ENCODE measurements at regions of chr3 and their contacts with region 1.

Region 1: GRCh38 chr3:125651244-125651643 is 55.9 kb upstream of the OSBPL11 start:
- DNase-seq: no peak
- ATAC-seq: no peak
- H3K4me3 ChIP-seq: no peak overlapping the region
- H3K27ac ChIP-seq: no peak overlapping the region
- H3K4me1 ChIP-seq: no peaks in the 10 kb centered on the region
- H3K27me3 ChIP-seq: no peaks in the 10 kb centered on the region
- CTCF ChIP-seq: no peak
- EP300 ChIP-seq: no peak
- POLR2A ChIP-seq: no peak
- RAD21 ChIP-seq: no peak

Region 2: GRCh38 chr3:125634336-125634950 is 16.8 kb before region 1 on chr3:
- CTCF ChIA-PET with region 1: no interaction called
- POLR2A ChIA-PET with region 1: no interaction called
- RAD21 ChIA-PET with region 1: no interaction called
- SMC1A ChIA-PET with region 1: no interaction called
- in situ Hi-C with region 1: no loop called
- intact Hi-C with region 1: no loop called
- DNase-seq: no peak
- ATAC-seq: no peak
- H3K4me3 ChIP-seq: no peak overlapping the region
- H3K27ac ChIP-seq: no peak overlapping the region
- H3K4me1 ChIP-seq: no peaks in the 10 kb centered on the region
- H3K27me3 ChIP-seq: no peaks in the 10 kb centered on the region
- CTCF ChIP-seq: no peak
- EP300 ChIP-seq: no peak
- POLR2A ChIP-seq: no peak
- RAD21 ChIP-seq: no peak

Region 3: GRCh38 chr3:125662675-125663074 is 11.4 kb after region 1 on chr3:
- CTCF ChIA-PET with region 1: interaction called, 4 read pairs
- POLR2A ChIA-PET with region 1: no interaction called
- RAD21 ChIA-PET with region 1: no interaction called
- SMC1A ChIA-PET with region 1: interaction called, 27 read pairs
- in situ Hi-C with region 1: no loop called
- intact Hi-C with region 1: no loop called
- DNase-seq: no peak
- ATAC-seq: no peak
- H3K4me3 ChIP-seq: no peak overlapping the region
- H3K27ac ChIP-seq: no peak overlapping the region
- H3K4me1 ChIP-seq: no peaks in the 10 kb centered on the region
- H3K27me3 ChIP-seq: no peaks in the 10 kb centered on the region
- CTCF ChIP-seq: no peak
- EP300 ChIP-seq: no peak
- POLR2A ChIP-seq: no peak
- RAD21 ChIP-seq: no peak

Region 4: GRCh38 chr3:127089486-127090145 is 1438.4 kb after region 1 on chr3:
- CTCF ChIA-PET with region 1: no interaction called
- POLR2A ChIA-PET with region 1: no interaction called
- RAD21 ChIA-PET with region 1: no interaction called
- SMC1A ChIA-PET with region 1: no interaction called
- in situ Hi-C with region 1: no loop called
- intact Hi-C with region 1: no loop called
- DNase-seq: no peak
- ATAC-seq: no peak
- H3K4me3 ChIP-seq: no peak overlapping the region
- H3K27ac ChIP-seq: no peak overlapping the region
- H3K4me1 ChIP-seq: no peaks in the 10 kb centered on the region
- H3K27me3 ChIP-seq: peaks cover 0 to 2% of the 10 kb centered on the region in 2 experiments; a peak in 2 of 4 replicates
- CTCF ChIP-seq: no peak
- EP300 ChIP-seq: no peak
- POLR2A ChIP-seq: no peak
- RAD21 ChIP-seq: no peak

Measured in GM12878 (cell line).